Right cardiac atrium (tissue), 5 donors: ENCODE measurements at regions of chr2 and their contacts with region 1.

Region 1: GRCh38 chr2:204325468-204325867 is 219.8 kb upstream of the PARD3B start:
- DNase-seq: peak in 2 of 3 donors; percentile 51 to 55
- ATAC-seq: peak; percentile 70 to 84
- H3K4me3 ChIP-seq: no peak overlapping the region
- H3K27ac ChIP-seq: no peak overlapping the region
- H3K4me1 ChIP-seq: no peaks in the 10 kb centered on the region
- H3K27me3 ChIP-seq: no peaks in the 10 kb centered on the region

Region 2: DNA sequence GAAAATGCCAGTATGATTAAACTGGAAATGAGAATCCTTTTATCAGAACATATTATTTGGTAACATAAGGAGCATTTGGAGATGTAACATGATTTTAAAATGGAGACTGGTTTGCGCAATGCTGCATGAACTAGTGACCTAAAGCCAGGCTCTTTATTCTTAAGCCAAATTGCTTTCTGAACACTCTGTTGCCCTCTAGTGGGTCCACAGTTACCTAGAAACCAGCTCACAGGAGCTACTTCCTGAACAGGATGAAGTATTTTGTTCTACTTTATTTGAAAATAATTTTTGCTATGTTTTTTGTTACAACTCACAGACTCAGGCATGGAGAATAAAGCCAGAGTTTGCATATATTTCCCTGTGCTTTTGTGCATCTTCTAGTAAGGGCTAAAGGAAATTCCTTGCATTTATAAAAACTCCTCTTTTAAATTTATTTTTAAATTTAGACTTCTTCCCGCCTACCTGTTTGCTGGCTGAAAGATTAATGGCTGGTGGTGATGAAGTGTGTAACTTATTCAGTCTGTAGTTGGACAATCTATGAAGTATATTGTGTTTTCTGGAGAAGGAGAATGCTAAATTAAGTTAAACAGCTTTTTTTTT is 366.5 kb after region 1 on chr2:
- intact Hi-C with region 1: loop called in 3 of 4 experiments (anchors 5 to 10 kb)
- DNase-seq: peak in 2 of 3 donors; percentile 13 to 32
- ATAC-seq: peak; percentile 85 to 89
- H3K4me3 ChIP-seq: no peak overlapping the region
- H3K27ac ChIP-seq: no peak overlapping the region
- H3K4me1 ChIP-seq: no peaks in the 10 kb centered on the region
- H3K27me3 ChIP-seq: no peaks in the 10 kb centered on the region